PC-9 (cell line): ENCODE measurements at regions of chr6 and their contacts with region 1.

Region 1: GRCh38 chr6:28683944-28684538 is 158.4 kb downstream of the GPX5 start:
- DNase-seq: peak in 1 of 2 experiments; percentile 42
- H3K4me3 ChIP-seq: peak overlapping the region; percentile 39; the same call in 1 of the 2 replicates
- H3K27ac ChIP-seq: no peak overlapping the region
- H3K4me1 ChIP-seq: no peaks in the 10 kb centered on the region
- H3K27me3 ChIP-seq: no peaks in the 10 kb centered on the region
- CTCF ChIP-seq: peak; percentile 87

Region 2: DNA sequence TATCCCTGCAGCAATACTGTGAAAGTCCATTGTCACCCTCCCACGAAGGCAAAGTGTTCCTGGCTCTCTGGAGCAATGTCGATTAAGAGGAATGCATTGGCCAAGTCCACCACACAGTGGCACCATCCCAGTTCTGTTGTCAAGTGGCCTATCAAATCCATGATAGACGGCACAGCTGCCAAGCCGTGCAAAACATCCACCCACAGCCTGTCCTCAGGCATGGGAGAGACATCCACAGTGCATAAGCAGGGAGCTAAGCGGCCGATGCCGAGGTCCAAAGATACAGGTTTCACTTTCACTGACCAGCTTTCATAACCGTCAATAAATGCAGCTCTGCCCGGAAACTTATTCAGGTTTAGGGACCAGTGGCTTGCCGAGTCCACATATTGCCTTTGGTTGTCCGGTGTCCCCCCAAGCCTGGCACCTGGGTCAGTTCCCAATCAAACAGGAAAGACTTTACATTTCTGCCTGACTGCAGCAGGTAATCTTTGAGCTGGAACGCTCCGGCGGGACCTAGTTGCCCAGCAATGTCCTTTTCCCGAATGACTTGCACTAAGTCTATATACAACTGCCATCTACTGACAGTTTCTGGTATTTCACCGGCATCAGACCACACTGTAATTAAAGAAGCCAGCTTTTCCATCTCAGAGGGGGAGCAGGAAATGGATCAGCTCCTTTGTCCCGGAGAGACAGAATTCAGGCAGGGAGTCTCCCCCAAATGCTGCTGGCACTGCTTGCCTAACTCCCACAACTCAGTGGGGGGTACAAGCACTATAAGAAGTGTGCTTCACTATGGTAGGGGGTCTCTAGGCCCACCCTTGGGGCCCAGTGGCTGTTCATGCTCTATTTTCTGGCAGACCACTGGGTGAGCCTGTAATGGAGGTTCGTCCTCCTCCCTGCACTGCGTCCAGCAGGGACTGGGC is 328.0 kb before region 1 on chr6:
- CTCF ChIA-PET with region 1: no interaction called
- POLR2A ChIA-PET with region 1: no interaction called
- intact Hi-C with region 1: loop called (anchors 5 kb)
- DNase-seq: peak; percentile 75 to 80
- H3K4me3 ChIP-seq: peak overlapping the region; percentile 70
- H3K27ac ChIP-seq: peak overlapping the region; percentile 55
- H3K4me1 ChIP-seq: peaks cover 28% of the 10 kb centered on the region
- H3K27me3 ChIP-seq: no peaks in the 10 kb centered on the region
- CTCF ChIP-seq: peak; percentile 86

Region 3: DNA sequence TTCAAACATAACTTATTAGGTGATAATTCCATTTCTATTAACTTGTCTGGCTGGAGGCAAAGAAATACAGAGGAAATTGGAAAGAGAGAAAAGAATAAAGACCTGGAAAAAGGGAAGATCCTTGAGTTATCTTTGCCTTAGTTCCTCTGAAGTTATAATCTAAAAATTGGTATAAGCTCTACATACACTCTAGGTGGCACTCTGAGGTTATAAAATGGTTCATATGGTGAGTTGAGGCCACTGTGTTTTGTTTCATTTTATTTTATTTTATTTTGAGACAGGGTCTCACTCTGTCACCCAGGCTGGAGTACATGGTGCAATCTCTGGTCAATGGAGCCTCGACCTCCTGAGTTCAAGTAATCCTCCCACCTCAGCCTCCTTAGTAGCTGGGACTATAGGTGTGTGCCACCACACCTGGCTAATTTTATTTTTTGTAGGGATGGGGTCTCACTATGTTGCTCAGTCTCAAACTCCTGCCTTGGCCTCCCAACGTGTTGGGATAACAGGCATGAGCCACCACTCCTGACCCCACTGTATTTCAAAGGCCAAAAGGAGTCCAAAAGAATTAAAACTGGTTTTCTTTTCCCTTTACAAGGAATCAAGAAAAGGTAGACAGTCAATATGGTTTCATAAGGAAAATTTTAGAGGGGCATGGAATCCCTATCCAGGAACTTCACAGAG is 187.8 kb before region 1 on chr6:
- CTCF ChIA-PET with region 1: no interaction called
- POLR2A ChIA-PET with region 1: no interaction called
- intact Hi-C with region 1: loop called (anchors 1 kb)
- DNase-seq: no peak
- H3K4me3 ChIP-seq: no peak overlapping the region
- H3K27ac ChIP-seq: no peak overlapping the region
- H3K4me1 ChIP-seq: peaks cover 20% of the 10 kb centered on the region
- H3K27me3 ChIP-seq: no peaks in the 10 kb centered on the region
- CTCF ChIP-seq: peak; percentile 41; the same call in 1 of the 2 replicates

Region 4: DNA sequence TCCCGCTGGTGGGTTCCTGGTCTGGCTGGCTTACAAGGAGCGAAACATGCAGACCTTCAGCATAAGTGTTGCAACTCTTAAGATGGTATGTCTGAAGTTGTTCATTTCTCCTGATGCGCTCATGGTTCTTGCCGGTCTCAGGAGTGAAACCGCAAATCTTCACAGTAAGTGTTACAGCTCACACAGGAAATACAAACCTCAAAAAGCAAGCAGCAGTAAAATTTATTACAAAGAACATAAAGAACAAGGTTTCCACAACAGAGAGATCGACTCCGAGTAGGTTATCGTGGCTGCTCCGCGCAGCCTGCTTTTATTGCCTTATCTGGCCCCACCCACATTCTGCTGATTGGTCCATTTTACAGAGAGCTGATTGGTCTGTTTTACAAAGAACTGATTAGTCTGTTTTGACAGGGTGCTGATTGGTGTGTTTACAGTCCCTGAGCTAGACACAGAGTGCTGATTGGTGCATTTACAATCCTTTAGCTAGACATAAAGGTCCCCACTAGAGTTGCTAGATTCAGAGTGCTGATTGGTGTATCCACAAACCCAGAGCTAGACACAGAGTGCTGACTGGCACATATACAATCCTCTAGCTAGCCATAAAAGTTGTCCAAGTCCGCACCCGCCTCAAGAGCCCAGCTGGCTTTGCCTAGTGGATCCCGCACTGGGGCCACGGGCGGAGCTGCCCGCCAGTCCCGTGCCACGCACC is 200.5 kb after region 1 on chr6:
- CTCF ChIA-PET with region 1: no interaction called
- POLR2A ChIA-PET with region 1: no interaction called
- intact Hi-C with region 1: no loop called
- DNase-seq: no peak
- H3K4me3 ChIP-seq: no peak overlapping the region
- H3K27ac ChIP-seq: no peak overlapping the region
- H3K4me1 ChIP-seq: no peaks in the 10 kb centered on the region; the same call in 1 of the 2 replicates
- H3K27me3 ChIP-seq: no peaks in the 10 kb centered on the region
- CTCF ChIP-seq: no peak

Region 5: DNA sequence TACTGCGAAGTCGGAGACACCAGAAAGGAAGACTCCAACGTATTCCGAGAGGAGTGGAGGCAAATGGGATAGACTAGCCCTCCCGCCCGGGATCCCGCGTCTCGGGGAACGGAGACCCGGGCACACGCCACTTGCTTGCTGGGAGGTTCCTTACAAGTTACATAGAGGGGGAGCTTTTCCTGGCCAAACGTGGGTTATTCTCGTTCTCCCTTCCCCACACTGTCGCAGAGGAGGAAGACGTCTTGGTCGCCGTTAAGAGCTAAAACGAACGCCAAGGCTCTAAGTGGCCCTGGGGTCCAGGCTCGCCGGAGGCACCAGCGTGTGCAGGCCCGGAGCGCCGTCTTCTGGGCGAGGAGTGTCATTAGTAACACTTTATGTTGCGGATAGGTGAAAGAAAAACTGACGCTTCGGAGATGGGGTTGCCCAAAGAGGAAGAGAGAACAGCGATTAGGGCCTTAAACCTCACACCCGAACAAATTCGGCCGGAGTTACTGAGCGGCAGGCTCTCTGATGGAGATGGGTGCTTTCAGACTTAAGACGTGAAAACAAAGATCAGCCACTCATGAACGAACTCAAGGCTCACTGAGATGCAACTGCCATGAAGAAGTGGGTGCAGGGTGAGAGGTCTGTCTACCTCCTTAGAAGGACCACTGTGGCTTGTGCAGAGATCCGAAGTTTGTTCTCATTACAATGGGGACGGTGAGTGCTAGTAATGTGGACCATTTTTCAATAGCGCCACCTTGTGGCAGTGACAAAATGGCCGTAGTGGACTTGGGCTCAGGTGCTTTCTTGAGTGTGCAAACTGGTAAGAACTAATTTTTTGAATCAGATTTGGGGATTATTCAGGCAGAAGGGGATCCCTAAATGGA is 332.8 kb after region 1 on chr6:
- CTCF ChIA-PET with region 1: no interaction called
- POLR2A ChIA-PET with region 1: no interaction called
- intact Hi-C with region 1: loop called (anchors 1 kb)
- DNase-seq: peak; percentile 62 to 77
- H3K4me3 ChIP-seq: peak overlapping the region; percentile 73
- H3K27ac ChIP-seq: no peak overlapping the region
- H3K4me1 ChIP-seq: no peaks in the 10 kb centered on the region
- H3K27me3 ChIP-seq: no peaks in the 10 kb centered on the region
- CTCF ChIP-seq: peak; percentile 94

Region 6: GRCh38 chr6:29589423-29590048 is 905.5 kb after region 1 on chr6:
- CTCF ChIA-PET with region 1: no interaction called
- POLR2A ChIA-PET with region 1: no interaction called
- intact Hi-C with region 1: loop called (anchors 1 kb)
- DNase-seq: peak in 1 of 2 experiments; percentile 45
- H3K4me3 ChIP-seq: no peak overlapping the region
- H3K27ac ChIP-seq: no peak overlapping the region
- H3K4me1 ChIP-seq: no peaks in the 10 kb centered on the region
- H3K27me3 ChIP-seq: peaks cover 51% of the 10 kb centered on the region
- CTCF ChIP-seq: peak; percentile 97